ENCODE measurements at regions of chr20 and their contacts with region 1.

Region 1: DNA sequence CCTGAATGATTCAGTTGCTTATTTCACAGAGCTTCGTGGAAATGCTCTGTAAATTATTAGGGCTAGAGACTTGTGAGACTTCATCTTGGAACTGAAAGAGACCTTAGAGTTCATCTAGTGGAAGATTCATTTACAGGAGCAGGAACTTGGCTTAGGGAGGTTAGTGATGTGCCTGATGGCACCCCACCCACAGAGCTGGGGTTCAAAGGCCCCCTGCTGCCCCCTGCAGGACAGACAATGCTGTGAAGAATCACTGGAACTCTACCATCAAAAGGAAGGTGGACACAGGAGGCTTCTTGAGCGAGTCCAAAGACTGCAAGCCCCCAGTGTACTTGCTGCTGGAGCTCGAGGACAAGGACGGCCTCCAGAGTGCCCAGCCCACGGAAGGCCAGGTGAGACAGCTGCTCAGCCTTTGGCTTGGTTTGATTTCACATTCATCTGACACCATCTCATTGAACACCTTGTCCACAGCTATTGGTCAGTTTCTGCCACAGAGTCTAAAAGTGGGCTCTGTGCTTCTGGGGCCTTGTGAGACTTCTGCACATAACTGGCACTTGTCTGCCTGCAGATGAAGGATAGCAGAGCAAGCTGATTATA is 25.1 kb downstream of the MYBL2 start:
- DNase-seq: peak; percentile 68
- H3K27ac ChIP-seq: no peak overlapping the region
- CTCF ChIP-seq: peak; percentile 69

Region 2: GRCh38 chr20:43448748-43449535 is 243.1 kb before region 1 on chr20:
- CTCF ChIA-PET with region 1: interaction called, 10 read pairs
- POLR2A ChIA-PET with region 1: no interaction called
- DNase-seq: peak; percentile 86
- H3K27ac ChIP-seq: no peak overlapping the region
- CTCF ChIP-seq: peak; percentile 96

Region 3: GRCh38 chr20:44069203-44070011 is 377.4 kb after region 1 on chr20:
- CTCF ChIA-PET with region 1: no interaction called
- POLR2A ChIA-PET with region 1: no interaction called
- DNase-seq: no peak
- H3K27ac ChIP-seq: no peak overlapping the region
- CTCF ChIP-seq: no peak

Measured in RWPE1 (cell line).